ENCODE measurements at regions of chr12 and their contacts with region 1.

Region 1: DNA sequence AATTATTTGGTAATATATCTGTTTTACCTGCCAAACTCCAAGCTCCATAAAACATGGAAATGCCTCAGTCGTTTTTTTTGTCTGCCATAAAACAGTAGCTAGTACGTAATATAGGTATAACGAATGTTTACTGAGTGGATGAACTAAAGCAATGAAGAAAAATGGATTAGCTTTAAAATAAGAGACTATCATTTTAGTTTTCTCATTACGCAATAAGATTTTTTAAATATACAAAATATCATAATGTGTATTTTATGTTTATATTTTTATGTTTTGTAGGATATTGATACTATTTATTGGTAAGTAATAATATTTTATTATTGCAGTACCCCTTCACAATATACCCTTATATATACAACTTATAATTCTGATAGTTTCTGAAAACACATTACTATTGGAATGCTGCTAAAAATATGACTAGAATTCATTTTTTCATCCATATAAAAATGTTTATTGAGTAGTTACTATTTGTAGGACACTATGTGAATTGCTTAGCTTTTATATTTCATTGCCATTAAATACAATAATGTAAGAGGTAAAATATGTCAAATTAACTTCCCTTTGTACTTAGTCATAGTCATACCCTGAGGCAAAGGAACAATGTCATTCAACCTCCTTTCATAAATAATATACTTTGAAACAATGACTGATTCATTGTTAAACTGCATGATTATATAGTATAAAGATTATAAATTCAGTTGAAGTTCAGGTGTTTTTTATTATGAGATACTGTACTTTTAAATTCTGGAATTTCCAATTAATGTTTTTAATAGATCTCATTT is 105.0 kb downstream of the GARIN6 start:
- DNase-seq: peak; percentile 79
- ATAC-seq: peak; percentile 83
- H3K4me3 ChIP-seq: no peak overlapping the region
- H3K27ac ChIP-seq: peak overlapping the region; percentile 43
- H3K4me1 ChIP-seq: peaks cover 12% of the 10 kb centered on the region
- H3K27me3 ChIP-seq: no peaks in the 10 kb centered on the region
- CTCF ChIP-seq: no peak

Region 2: GRCh38 chr12:99157946-99158345 is 594.6 kb before region 1 on chr12:
- CTCF ChIA-PET with region 1: no interaction called
- POLR2A ChIA-PET with region 1: no interaction called
- intact Hi-C with region 1: loop called (anchors 2 kb)
- DNase-seq: peak; percentile 86
- ATAC-seq: peak; percentile 93
- H3K4me3 ChIP-seq: no peak overlapping the region
- H3K27ac ChIP-seq: peak overlapping the region; percentile 37
- H3K4me1 ChIP-seq: peaks cover 16% of the 10 kb centered on the region
- H3K27me3 ChIP-seq: 0 out of 2 replicates have a peak, but pooled peaks cover 3% of the 10 kb centered on the region
- CTCF ChIP-seq: no peak

Region 3: GRCh38 chr12:99619389-99620158 is 133.0 kb before region 1 on chr12:
- CTCF ChIA-PET with region 1: no interaction called
- POLR2A ChIA-PET with region 1: no interaction called
- intact Hi-C with region 1: no loop called
- DNase-seq: peak; percentile 72
- ATAC-seq: peak; percentile 90
- H3K4me3 ChIP-seq: no peak overlapping the region
- H3K27ac ChIP-seq: no peak overlapping the region
- H3K4me1 ChIP-seq: no peaks in the 10 kb centered on the region
- H3K27me3 ChIP-seq: 0 out of 2 replicates have a peak, but pooled peaks cover 4% of the 10 kb centered on the region
- CTCF ChIP-seq: peak; percentile 90

Region 4: DNA sequence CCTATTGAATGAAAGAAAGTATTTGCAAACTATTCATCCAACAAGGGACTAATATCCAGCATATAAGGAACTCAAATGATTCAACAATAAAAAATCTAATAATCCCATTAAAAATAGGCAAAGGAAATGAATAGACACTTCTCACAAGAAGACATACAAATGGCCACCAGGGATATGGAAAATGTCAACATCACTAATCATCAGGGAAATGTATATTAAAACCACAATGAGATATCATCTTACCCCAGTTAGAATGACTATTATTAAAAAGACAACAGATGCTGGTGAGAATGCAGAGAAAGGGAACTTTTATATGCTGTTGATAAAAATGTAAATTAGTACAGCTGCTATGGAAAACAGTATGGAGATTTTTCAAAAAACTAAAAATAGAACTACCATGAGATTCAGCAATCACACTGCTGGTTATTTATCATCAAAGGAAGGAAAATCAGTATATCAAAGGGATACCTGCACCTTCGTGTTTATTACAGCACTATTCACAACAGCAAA is 15.7 kb before region 1 on chr12:
- CTCF ChIA-PET with region 1: no interaction called
- POLR2A ChIA-PET with region 1: no interaction called
- intact Hi-C with region 1: loop called (anchors 2 kb)
- DNase-seq: peak; percentile 48
- ATAC-seq: peak; percentile 88
- H3K4me3 ChIP-seq: 0 out of 2 replicates have a peak overlapping the region, but pooled peaks have one; percentile 13
- H3K27ac ChIP-seq: peak overlapping the region; percentile 29; the same call in 1 of the 2 replicates
- H3K4me1 ChIP-seq: 0 out of 2 replicates have a peak, but pooled peaks cover 10% of the 10 kb centered on the region
- H3K27me3 ChIP-seq: no peaks in the 10 kb centered on the region
- CTCF ChIP-seq: no peak